ENCODE measurements at regions of chr15 and their contacts with region 1.

Region 1: GRCh38 chr15:62389885-62390790 is 225.1 kb upstream of the C2CD4B start:
- DNase-seq: peak; percentile 52
- ATAC-seq: peak; percentile 73
- H3K4me3 ChIP-seq: peak within 1 kb of the TSS; percentile 90 to 100 (median 95)
- H3K27ac ChIP-seq: peak within 1 kb of the TSS; percentile 75
- H3K4me1 ChIP-seq: peaks cover 36% of the 10 kb centered on the region
- H3K27me3 ChIP-seq: no peaks in the 10 kb centered on the region; a peak in 1 of 5 replicates
- CTCF ChIP-seq: no peak; the same call in 1 of the 2 replicates
- EP300 ChIP-seq: no peak
- POLR2A ChIP-seq: peak; percentile 92 to 94
- RAD21 ChIP-seq: peak; percentile 50; the same call in 1 of the 2 replicates

Region 2: DNA sequence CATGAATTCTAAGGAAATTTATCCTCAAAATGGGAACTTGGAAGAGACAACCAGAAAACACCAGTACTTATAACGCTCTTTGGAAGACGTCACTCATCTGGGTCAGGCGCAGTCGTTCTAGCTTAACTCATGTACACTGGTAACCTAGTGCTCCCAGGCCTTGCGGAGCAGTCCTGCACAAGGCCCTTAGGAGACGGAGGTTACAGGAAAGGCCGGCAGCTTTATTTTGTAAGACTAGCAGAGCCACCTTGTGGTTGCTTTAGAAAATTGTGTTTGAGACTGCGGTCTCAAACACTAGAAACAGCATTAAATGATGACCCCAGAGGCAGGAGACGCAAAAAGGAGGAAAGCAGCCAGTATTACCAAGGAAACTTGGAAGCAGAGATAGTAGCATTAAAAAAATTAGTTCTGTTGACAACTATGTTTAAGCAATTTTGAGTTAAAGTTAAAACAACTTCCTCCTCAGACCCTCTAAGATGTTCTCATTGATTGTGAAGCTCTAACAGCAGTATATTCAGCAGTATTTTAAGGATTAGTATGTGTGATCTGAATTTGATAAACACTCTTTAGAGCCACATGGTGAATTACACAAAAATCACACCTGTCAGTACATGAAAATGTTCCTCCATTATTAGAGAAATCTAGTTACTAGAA is 83.2 kb before region 1 on chr15:
- CTCF ChIA-PET with region 1: no interaction called
- POLR2A ChIA-PET with region 1: no interaction called
- in situ Hi-C with region 1: no loop called
- intact Hi-C with region 1: no loop called
- DNase-seq: peak; percentile 73
- ATAC-seq: peak; percentile 96
- H3K4me3 ChIP-seq: no peak overlapping the region
- H3K27ac ChIP-seq: no peak overlapping the region
- H3K4me1 ChIP-seq: no peaks in the 10 kb centered on the region
- H3K27me3 ChIP-seq: peaks cover 1 to 15% of the 10 kb centered on the region in 2 experiments; a peak in 3 of 5 replicates
- CTCF ChIP-seq: peak; percentile 79
- EP300 ChIP-seq: no peak
- POLR2A ChIP-seq: no peak
- RAD21 ChIP-seq: peak; percentile 69

Region 3: DNA sequence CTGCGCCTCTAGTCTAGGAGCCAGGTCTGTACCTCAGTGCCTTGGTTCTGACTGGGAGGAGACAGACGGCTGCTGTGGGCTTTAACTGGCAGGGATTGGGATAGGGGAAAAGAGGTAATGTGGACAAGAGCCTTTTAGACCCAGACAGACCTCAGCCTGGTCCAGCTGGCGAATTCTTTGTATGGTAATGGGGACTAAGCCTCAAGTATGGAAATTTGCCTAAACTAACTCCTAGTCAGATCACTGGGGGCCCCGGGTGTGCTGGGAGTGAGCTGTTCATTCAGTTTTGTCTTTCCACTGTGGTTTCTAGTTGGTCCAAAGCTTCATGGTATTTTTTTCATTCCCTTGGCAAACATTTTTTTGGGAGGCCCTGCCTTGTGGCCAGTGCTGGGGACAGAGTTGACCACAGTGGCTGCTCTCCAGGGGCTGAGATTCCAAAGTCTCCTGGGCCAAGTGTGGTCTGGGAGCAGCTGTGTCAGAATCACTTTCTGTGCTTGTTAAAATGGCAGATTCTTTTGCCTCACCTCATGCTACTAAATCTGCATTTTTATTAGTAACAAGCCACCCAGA is 36.3 kb after region 1 on chr15:
- CTCF ChIA-PET with region 1: no interaction called
- POLR2A ChIA-PET with region 1: no interaction called
- in situ Hi-C with region 1: no loop called
- intact Hi-C with region 1: loop called (anchors 1 kb)
- DNase-seq: peak; percentile 18
- ATAC-seq: peak; percentile 69
- H3K4me3 ChIP-seq: no peak overlapping the region
- H3K27ac ChIP-seq: peak overlapping the region; percentile 30
- H3K4me1 ChIP-seq: peaks cover 49% of the 10 kb centered on the region
- H3K27me3 ChIP-seq: no peaks in the 10 kb centered on the region
- CTCF ChIP-seq: no peak
- EP300 ChIP-seq: no peak
- POLR2A ChIP-seq: no peak
- RAD21 ChIP-seq: no peak

Region 4: DNA sequence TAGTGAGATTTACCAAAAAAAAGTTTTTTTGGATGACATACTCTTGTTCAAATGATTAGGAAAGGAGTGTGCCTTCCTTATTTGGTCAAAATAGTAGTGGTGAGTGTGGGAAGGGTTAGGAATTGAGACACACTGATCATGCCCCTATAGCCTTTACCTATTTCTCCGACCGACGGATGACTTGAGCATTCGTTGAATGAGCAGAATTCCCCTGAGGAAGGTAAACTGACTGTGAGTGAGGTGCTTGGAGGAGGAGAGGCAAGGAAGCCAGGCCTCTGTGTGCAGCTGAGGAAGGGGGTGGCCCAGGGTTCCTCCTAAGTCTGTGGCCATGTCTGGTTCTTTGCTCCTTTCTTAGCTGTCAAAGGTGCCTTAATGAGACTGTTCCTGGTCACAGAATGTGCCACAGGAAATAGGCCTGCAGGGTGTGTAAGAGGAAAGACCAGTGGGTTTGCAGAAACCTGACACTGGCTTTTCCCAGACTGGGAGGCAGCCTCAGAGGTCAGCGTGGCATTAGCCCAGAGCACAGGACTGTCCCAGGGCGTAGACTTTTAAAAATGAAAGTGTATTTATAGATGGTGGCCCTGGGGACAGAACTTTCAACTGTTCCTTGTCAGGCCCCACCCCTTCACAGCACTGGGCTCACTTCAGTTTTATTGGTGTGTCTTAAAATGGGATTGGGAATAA is 82.6 kb after region 1 on chr15:
- CTCF ChIA-PET with region 1: no interaction called
- POLR2A ChIA-PET with region 1: no interaction called
- in situ Hi-C with region 1: no loop called
- intact Hi-C with region 1: loop called (anchors 2 kb)
- DNase-seq: peak; percentile 54
- ATAC-seq: peak; percentile 95
- H3K4me3 ChIP-seq: no peak overlapping the region
- H3K27ac ChIP-seq: peak overlapping the region; percentile 25
- H3K4me1 ChIP-seq: peaks cover 31% of the 10 kb centered on the region
- H3K27me3 ChIP-seq: no peaks in the 10 kb centered on the region
- CTCF ChIP-seq: 0 out of 2 replicates have a peak, but pooled peaks have one; percentile 16
- EP300 ChIP-seq: no peak
- POLR2A ChIP-seq: no peak
- RAD21 ChIP-seq: no peak

Region 5: DNA sequence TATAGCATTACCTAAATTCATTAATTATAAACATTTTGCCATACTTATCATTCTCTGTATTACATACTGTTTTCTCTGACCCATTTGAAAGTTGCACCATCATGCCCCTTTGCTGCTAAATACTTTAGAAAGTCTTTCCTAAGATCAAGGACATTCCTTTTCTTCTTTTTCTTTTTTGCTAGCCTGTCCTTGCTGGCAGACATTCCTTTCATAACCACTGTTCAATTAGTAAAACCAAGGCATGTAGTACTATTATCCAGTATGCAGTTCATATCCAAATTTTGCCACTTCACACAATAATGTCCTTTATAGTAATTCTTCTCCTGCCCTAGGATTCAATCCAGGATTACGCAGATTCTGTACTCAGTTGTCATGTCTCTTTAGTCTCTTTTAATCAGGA is 95.9 kb after region 1 on chr15:
- CTCF ChIA-PET with region 1: no interaction called
- POLR2A ChIA-PET with region 1: interaction called, 5 read pairs
- in situ Hi-C with region 1: no loop called
- intact Hi-C with region 1: loop called (anchors 5 kb)
- DNase-seq: no peak
- ATAC-seq: no peak
- H3K4me3 ChIP-seq: no peak overlapping the region
- H3K27ac ChIP-seq: no peak overlapping the region
- H3K4me1 ChIP-seq: peaks cover 24% of the 10 kb centered on the region
- H3K27me3 ChIP-seq: no peaks in the 10 kb centered on the region
- CTCF ChIP-seq: no peak
- EP300 ChIP-seq: no peak
- POLR2A ChIP-seq: no peak
- RAD21 ChIP-seq: no peak

Region 6: DNA sequence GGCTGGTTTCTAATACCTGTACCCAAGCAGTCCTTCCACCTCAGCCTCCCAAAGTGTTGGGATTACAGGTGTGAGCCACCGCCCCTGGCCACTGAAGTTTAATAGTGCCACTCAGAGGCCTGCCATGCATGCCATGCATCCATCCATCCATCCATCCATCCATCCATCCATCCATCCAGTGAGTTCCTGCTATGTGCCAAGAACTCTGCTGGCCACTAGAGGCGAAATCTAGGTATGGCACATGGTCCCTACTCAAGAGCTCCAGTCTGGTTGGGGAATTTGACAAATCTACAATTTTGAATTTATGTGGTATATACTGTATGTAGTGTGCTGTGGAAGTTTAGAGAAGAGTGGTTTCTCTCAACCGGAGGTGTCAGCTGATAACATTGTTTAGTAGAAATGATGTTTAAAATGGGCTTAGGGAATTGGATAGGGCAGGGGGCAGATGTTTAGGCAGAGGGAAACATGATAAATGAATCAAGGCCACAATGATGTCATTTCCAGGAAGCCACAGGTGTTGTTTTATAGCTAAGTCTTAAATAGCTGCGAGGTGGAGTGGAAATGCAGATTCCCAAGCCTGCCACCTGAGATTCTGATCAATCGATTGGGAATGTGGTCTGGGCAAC is 159.3 kb after region 1 on chr15:
- CTCF ChIA-PET with region 1: no interaction called
- POLR2A ChIA-PET with region 1: no interaction called
- in situ Hi-C with region 1: loop called (anchors 10 kb)
- intact Hi-C with region 1: loop called (anchors 5 kb)
- DNase-seq: peak; percentile 40
- ATAC-seq: peak; percentile 74
- H3K4me3 ChIP-seq: no peak overlapping the region
- H3K27ac ChIP-seq: no peak overlapping the region
- H3K4me1 ChIP-seq: no peaks in the 10 kb centered on the region
- H3K27me3 ChIP-seq: no peaks in the 10 kb centered on the region
- CTCF ChIP-seq: peak; percentile 69
- EP300 ChIP-seq: no peak
- POLR2A ChIP-seq: no peak
- RAD21 ChIP-seq: 0 out of 2 replicates have a peak, but pooled peaks have one; percentile 11

Region 7: GRCh38 chr15:62649793-62650420 is 259.8 kb after region 1 on chr15:
- CTCF ChIA-PET with region 1: no interaction called
- POLR2A ChIA-PET with region 1: no interaction called
- in situ Hi-C with region 1: no loop called
- intact Hi-C with region 1: loop called (anchors 2 kb)
- DNase-seq: no peak
- ATAC-seq: no peak
- H3K4me3 ChIP-seq: no peak overlapping the region
- H3K27ac ChIP-seq: no peak overlapping the region
- H3K4me1 ChIP-seq: peaks cover 14% of the 10 kb centered on the region
- H3K27me3 ChIP-seq: no peaks in the 10 kb centered on the region
- CTCF ChIP-seq: no peak
- EP300 ChIP-seq: no peak
- POLR2A ChIP-seq: no peak
- RAD21 ChIP-seq: no peak

Measured in HepG2 (cell line).